ENCODE measurements at regions of chr1 and their contacts with region 1.

Region 1: GRCh38 chr1:169106095-169106920 is at the start of gene ATP1B1:
- DNase-seq: peak; percentile 93
- ATAC-seq: peak; percentile 89 to 92
- H3K4me3 ChIP-seq: peak within 1 kb of the TSS; percentile 92
- H3K27ac ChIP-seq: peak within 1 kb of the TSS; percentile 91
- H3K4me1 ChIP-seq: peaks cover 59% of the 10 kb centered on the region
- H3K27me3 ChIP-seq: no peaks in the 10 kb centered on the region
- CTCF ChIP-seq: peak; percentile 63
- total RNA-seq, gene ATP1B1: 173 TPM

Region 2: GRCh38 chr1:168637350-168637991 is 468.8 kb before region 1 on chr1:
- intact Hi-C with region 1: loop called (anchors 10 kb)
- DNase-seq: no peak
- ATAC-seq: peak; percentile 65 to 81
- H3K4me3 ChIP-seq: no peak overlapping the region
- H3K27ac ChIP-seq: no peak overlapping the region
- H3K4me1 ChIP-seq: peaks cover 19% of the 10 kb centered on the region
- H3K27me3 ChIP-seq: no peaks in the 10 kb centered on the region
- CTCF ChIP-seq: peak; percentile 57

Region 3: GRCh38 chr1:168834225-168834872 is 272.0 kb before region 1 on chr1:
- intact Hi-C with region 1: loop called (anchors 10 kb)
- DNase-seq: no peak
- ATAC-seq: peak; percentile 57 to 68
- H3K4me3 ChIP-seq: no peak overlapping the region
- H3K27ac ChIP-seq: peak overlapping the region; percentile 34
- H3K4me1 ChIP-seq: no peaks in the 10 kb centered on the region
- H3K27me3 ChIP-seq: no peaks in the 10 kb centered on the region
- CTCF ChIP-seq: no peak

Region 4: GRCh38 chr1:169161496-169162194 is 55.3 kb after region 1 on chr1:
- intact Hi-C with region 1: no loop called
- DNase-seq: no peak
- ATAC-seq: no peak
- H3K4me3 ChIP-seq: no peak overlapping the region
- H3K27ac ChIP-seq: no peak overlapping the region
- H3K4me1 ChIP-seq: no peaks in the 10 kb centered on the region
- H3K27me3 ChIP-seq: no peaks in the 10 kb centered on the region
- CTCF ChIP-seq: no peak